Right cardiac atrium (tissue), 5 donors: ENCODE measurements at regions of chr5 and their contacts with region 1.

Region 1: DNA sequence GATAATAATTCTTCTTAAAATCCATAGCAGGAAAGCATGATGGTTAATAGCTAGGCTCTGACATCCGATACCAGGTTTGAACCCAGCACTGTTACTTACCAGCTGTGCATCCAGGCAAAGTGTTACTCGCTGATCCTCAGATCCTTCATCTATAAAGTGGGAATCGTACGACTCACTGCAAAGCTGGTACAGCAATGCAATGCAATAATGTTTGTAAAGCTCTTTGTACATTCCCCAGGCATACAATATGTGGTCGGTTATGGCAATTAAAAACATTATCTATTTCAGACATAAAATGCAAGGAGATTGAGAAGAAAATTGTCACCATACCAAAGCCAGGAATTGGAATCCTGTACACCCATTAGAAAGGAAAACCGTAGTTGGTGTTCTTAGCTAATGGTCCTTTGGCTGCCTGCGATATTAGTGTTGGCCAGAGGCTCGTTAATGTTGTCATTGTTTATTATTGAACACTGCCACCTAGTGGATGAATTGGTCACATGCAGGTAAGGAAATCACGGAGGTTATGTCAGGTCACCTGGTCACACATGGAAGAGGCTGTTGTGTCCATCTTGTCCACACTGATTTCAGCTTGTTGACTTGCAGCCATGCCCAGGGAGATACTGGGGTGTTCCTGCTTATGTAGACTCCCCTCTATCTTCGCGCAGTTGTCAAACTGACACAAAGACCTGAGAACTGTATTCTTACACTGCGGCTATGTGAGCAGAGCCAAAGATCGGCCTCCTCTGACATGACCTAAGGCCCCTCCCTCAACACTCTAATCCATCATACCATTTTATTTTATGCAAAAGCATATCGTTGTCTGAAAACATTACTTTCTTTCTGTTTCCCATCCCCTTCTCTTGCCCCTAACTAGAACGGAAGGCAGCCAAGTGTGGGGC is 87.5 kb upstream of the PPP2R2B start:
- DNase-seq: peak; percentile 23 to 51 (median 38)
- ATAC-seq: peak; percentile 88 to 92
- H3K4me3 ChIP-seq: no peak overlapping the region
- H3K27ac ChIP-seq: no peak overlapping the region
- H3K4me1 ChIP-seq: no peaks in the 10 kb centered on the region
- H3K27me3 ChIP-seq: no peaks in the 10 kb centered on the region

Region 2: DNA sequence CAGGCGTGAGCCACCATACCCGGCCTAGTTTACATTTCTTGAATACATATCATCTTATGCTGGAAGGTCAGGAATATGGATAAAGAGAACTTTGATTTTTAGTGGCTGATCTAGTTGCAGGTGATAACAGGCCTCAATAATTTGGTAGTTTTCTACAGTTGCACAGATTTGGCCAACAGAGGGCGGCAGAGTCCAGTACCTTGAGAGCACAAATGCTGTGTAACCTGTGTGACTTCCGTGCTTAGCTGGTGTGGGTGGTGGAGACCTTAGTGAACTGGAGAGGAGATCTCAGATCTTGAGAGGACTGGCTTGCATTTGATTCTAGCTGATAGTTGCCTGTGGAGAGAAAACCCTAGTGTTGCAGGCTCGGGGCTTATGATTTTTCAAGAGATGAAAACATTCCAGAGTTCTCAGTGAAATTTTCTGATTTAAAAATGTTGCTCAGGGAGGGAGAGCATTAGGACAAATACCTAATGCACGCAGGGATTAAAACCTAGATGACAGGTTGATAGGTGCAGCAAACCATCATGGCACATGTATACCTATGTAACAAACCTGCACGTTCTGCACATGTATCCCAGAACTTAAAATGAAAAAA is 432.7 kb before region 1 on chr5:
- intact Hi-C with region 1: loop called in 1 of 4 experiments (anchors 10 kb)
- DNase-seq: peak; percentile 54 to 79 (median 67)
- ATAC-seq: peak; percentile 64 to 68
- H3K4me3 ChIP-seq: no peak overlapping the region
- H3K27ac ChIP-seq: no peak overlapping the region
- H3K4me1 ChIP-seq: no peaks in the 10 kb centered on the region
- H3K27me3 ChIP-seq: no peaks in the 10 kb centered on the region

Region 3: DNA sequence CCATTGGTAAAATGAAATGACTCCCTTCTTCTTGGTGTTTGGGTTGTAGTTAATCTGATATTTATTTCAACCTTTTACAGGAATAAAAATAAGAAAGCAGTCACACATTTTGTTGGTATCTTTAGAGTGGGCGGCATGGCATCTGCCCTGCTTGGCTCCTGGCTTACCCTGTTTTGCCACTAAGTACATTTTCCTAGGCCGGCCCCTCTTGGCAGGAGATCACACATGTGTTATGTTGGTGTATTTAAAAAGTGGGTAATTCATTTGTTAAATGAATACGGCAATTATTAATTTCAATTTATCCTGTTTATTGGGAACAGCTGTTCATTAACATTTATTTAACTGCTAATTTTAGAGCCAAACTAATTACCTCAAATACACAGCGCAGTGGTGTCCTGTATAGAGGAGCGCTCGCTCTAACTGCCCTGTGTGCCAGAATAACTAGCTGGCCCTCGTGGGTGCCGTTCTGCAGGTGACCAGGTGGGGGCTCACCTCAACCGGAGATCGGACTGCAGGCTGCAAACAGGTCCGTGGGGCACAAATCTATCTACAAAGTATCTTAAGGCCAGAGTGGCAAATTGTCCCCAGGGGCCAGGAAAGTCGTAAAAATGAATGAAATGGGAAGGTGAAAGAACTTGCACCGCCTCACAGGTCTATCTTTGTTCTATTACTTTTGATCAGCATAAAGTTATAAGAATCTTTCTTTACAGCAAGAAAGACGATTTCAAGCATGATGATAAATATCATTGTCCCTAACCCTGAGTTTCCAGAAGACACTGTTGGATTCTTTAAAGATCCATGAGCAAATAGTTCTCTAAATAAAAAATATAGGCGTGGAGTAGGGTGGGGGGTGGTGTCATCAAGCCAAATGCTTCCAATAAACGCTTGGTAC is 423.8 kb before region 1 on chr5:
- intact Hi-C with region 1: loop called (anchors 5 to 10 kb)
- DNase-seq: peak; percentile 71 to 83 (median 82)
- ATAC-seq: peak; percentile 76 to 82
- H3K4me3 ChIP-seq: no peak overlapping the region
- H3K27ac ChIP-seq: no peak overlapping the region
- H3K4me1 ChIP-seq: no peaks in the 10 kb centered on the region
- H3K27me3 ChIP-seq: peaks cover 2% of the 10 kb centered on the region

Region 4: GRCh38 chr5:146565764-146566367 is 400.1 kb before region 1 on chr5:
- intact Hi-C with region 1: loop called in 1 of 4 experiments (anchors 10 kb)
- DNase-seq: peak in 1 of 3 donors; percentile 21
- ATAC-seq: peak; percentile 74 to 77
- H3K4me3 ChIP-seq: no peak overlapping the region
- H3K27ac ChIP-seq: no peak overlapping the region
- H3K4me1 ChIP-seq: no peaks in the 10 kb centered on the region
- H3K27me3 ChIP-seq: no peaks in the 10 kb centered on the region

Region 5: DNA sequence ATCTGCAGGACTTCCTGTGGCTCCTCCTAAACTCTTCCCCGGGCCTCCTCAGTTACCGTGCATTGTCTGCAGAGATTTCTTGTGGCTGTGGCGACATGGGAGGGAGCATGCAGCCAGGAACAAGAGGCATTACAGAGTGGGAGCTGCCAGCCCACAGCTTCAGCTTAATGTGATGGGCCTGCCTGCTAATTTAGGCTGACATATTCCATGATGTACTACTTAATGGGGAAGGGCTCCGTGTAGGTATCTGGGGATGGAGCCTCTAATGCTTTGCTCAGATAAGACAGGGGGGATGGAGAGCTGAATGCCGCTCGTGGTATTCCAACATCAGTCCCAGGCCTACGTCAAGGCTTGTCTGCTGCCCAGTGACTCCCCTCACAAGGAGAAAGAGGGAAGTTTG is 312.4 kb before region 1 on chr5:
- intact Hi-C with region 1: loop called in 1 of 4 experiments (anchors 10 kb)
- DNase-seq: no peak
- ATAC-seq: no peak
- H3K4me3 ChIP-seq: no peak overlapping the region
- H3K27ac ChIP-seq: no peak overlapping the region
- H3K4me1 ChIP-seq: no peaks in the 10 kb centered on the region
- H3K27me3 ChIP-seq: no peaks in the 10 kb centered on the region

Region 6: DNA sequence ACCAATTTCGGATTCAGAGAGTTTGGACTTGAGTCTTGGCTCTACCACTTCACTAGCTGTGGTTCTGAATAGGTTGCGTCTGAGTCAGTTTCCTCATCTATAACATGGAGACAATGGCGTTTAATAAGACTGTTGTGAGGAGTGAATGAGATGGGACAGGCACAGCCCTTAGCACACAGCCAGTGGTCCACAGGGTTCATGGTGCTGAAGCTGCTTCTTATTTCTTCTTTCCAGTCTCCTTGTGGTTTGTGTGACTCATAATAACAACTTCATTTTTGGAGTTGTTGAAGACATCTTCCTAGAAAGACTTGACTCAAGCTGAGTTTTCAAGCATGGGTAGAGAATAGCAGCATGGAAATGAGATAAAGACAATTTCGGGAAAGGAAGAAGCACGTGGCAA is 85.2 kb after region 1 on chr5:
- intact Hi-C with region 1: no loop called
- DNase-seq: no peak
- ATAC-seq: no peak
- H3K4me3 ChIP-seq: no peak overlapping the region
- H3K27ac ChIP-seq: no peak overlapping the region
- H3K4me1 ChIP-seq: no peaks in the 10 kb centered on the region
- H3K27me3 ChIP-seq: no peaks in the 10 kb centered on the region